ENCODE measurements at regions of chr5 and their contacts with region 1.

Region 1: GRCh38 chr5:11182441-11183268 is 421.6 kb upstream of the DAP start:
- DNase-seq: peak in 1 of 2 experiments; percentile 62
- H3K4me3 ChIP-seq: no peak overlapping the region
- H3K4me3 Mint-ChIP-seq: no peak overlapping the region
- H3K27ac Mint-ChIP-seq: no peak overlapping the region
- H3K4me1 ChIP-seq: no peaks in the 10 kb centered on the region
- H3K4me1 Mint-ChIP-seq: no peaks in the 10 kb centered on the region
- H3K27me3 ChIP-seq: no peaks in the 10 kb centered on the region
- H3K27me3 Mint-ChIP-seq: no peaks in the 10 kb centered on the region
- CTCF ChIP-seq: peak; percentile 56 to 62

Region 2: DNA sequence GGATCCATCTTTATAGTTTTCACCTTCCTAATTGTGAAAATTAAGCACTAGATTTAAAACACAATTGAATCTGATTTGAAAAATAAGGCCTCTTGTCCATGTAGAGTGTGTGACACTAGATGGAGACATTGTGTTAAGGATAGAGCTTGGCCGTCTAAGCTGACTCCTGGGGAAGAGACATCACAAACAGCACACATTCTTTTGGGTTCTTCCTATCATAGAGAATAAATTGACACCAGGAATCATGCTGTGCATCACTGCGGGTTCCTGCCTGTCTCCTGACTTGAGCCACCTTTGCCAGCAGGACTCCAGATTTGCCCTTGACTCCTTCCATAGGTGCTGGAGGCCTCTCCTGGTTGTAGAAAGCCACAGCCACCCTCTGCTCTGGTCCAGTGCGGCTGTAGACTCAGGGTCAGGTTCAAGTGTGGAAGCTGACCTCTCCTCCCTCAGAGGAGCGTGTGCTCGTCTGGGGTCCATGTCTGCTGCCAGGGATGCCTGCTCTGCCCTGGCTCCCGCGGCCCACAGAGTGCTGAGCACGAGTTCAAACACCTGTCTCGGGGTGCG is 729.8 kb before region 1 on chr5:
- CTCF ChIA-PET with region 1: no interaction called
- POLR2A ChIA-PET with region 1: no interaction called
- intact Hi-C with region 1: loop called (anchors 1 kb)
- DNase-seq: peak; percentile 55 to 69
- H3K4me3 ChIP-seq: no peak overlapping the region
- H3K4me3 Mint-ChIP-seq: no peak overlapping the region
- H3K27ac Mint-ChIP-seq: no peak overlapping the region
- H3K4me1 ChIP-seq: peaks cover 11% of the 10 kb centered on the region
- H3K4me1 Mint-ChIP-seq: no peaks in the 10 kb centered on the region
- H3K27me3 ChIP-seq: no peaks in the 10 kb centered on the region
- H3K27me3 Mint-ChIP-seq: no peaks in the 10 kb centered on the region
- CTCF ChIP-seq: peak; percentile 67 to 79

Region 3: GRCh38 chr5:10695055-10695649 is 487.5 kb before region 1 on chr5:
- CTCF ChIA-PET with region 1: no interaction called
- POLR2A ChIA-PET with region 1: no interaction called
- intact Hi-C with region 1: loop called (anchors 5 kb)
- DNase-seq: peak; percentile 53 to 63
- H3K4me3 ChIP-seq: no peak overlapping the region
- H3K4me3 Mint-ChIP-seq: no peak overlapping the region
- H3K27ac Mint-ChIP-seq: no peak overlapping the region
- H3K4me1 ChIP-seq: peaks cover 16% of the 10 kb centered on the region; the same call in 1 of the 2 replicates
- H3K4me1 Mint-ChIP-seq: peaks cover 14% of the 10 kb centered on the region
- H3K27me3 ChIP-seq: no peaks in the 10 kb centered on the region
- H3K27me3 Mint-ChIP-seq: no peaks in the 10 kb centered on the region
- CTCF ChIP-seq: peak; percentile 62 to 67

Region 4: GRCh38 chr5:10863763-10864383 is 318.8 kb before region 1 on chr5:
- CTCF ChIA-PET with region 1: no interaction called
- POLR2A ChIA-PET with region 1: no interaction called
- intact Hi-C with region 1: loop called (anchors 10 kb)
- DNase-seq: peak; percentile 47 to 61
- H3K4me3 ChIP-seq: no peak overlapping the region
- H3K4me3 Mint-ChIP-seq: no peak overlapping the region
- H3K27ac Mint-ChIP-seq: no peak overlapping the region
- H3K4me1 ChIP-seq: peaks cover 16% of the 10 kb centered on the region
- H3K4me1 Mint-ChIP-seq: peaks cover 11% of the 10 kb centered on the region
- H3K27me3 ChIP-seq: no peaks in the 10 kb centered on the region
- H3K27me3 Mint-ChIP-seq: peaks cover 3% of the 10 kb centered on the region
- CTCF ChIP-seq: peak; percentile 71 to 89

Region 5: GRCh38 chr5:11046160-11046559 is 136.5 kb before region 1 on chr5:
- CTCF ChIA-PET with region 1: no interaction called
- POLR2A ChIA-PET with region 1: no interaction called
- intact Hi-C with region 1: loop called (anchors 1 kb)
- DNase-seq: no peak
- H3K4me3 ChIP-seq: no peak overlapping the region
- H3K4me3 Mint-ChIP-seq: no peak overlapping the region
- H3K27ac Mint-ChIP-seq: no peak overlapping the region
- H3K4me1 ChIP-seq: 0 out of 2 replicates have a peak, but pooled peaks cover 3% of the 10 kb centered on the region
- H3K4me1 Mint-ChIP-seq: peaks cover 6% of the 10 kb centered on the region
- H3K27me3 ChIP-seq: no peaks in the 10 kb centered on the region
- H3K27me3 Mint-ChIP-seq: no peaks in the 10 kb centered on the region
- CTCF ChIP-seq: no peak

Region 6: GRCh38 chr5:12109084-12109708 is 926.5 kb after region 1 on chr5:
- CTCF ChIA-PET with region 1: no interaction called
- POLR2A ChIA-PET with region 1: no interaction called
- intact Hi-C with region 1: loop called (anchors 5 kb)
- DNase-seq: peak; percentile 51 to 63
- H3K4me3 ChIP-seq: no peak overlapping the region
- H3K4me3 Mint-ChIP-seq: peak overlapping the region; percentile 21
- H3K27ac Mint-ChIP-seq: peak overlapping the region; percentile 15
- H3K4me1 ChIP-seq: peaks cover 33% of the 10 kb centered on the region
- H3K4me1 Mint-ChIP-seq: peaks cover 32% of the 10 kb centered on the region
- H3K27me3 ChIP-seq: no peaks in the 10 kb centered on the region
- H3K27me3 Mint-ChIP-seq: no peaks in the 10 kb centered on the region
- CTCF ChIP-seq: no peak